Activated CD4-positive, alpha-beta memory T cell treated with anti-CD3 and anti-CD28 coated beads for 36 hours (primary cell): ENCODE measurements at regions of chr1 and their contacts with region 1.

Region 1: GRCh38 chr1:207868774-207869721 is 41.9 kb downstream of the CD34 start:
- DNase-seq: peak; percentile 81
- H3K4me3 Mint-ChIP-seq: peak overlapping the region; percentile 90
- H3K27ac Mint-ChIP-seq: peak overlapping the region; percentile 89
- H3K4me1 Mint-ChIP-seq: peaks cover 82% of the 10 kb centered on the region
- H3K27me3 Mint-ChIP-seq: no peaks in the 10 kb centered on the region

Region 2: GRCh38 chr1:207084701-207085180 is 784.3 kb before region 1 on chr1:
- CTCF ChIA-PET with region 1: no interaction called
- POLR2A ChIA-PET with region 1: no interaction called
- intact Hi-C with region 1: no loop called
- DNase-seq: peak; percentile 60
- H3K4me3 Mint-ChIP-seq: no peak overlapping the region
- H3K27ac Mint-ChIP-seq: no peak overlapping the region
- H3K4me1 Mint-ChIP-seq: peaks cover 14% of the 10 kb centered on the region
- H3K27me3 Mint-ChIP-seq: peaks cover 23% of the 10 kb centered on the region

Region 3: DNA sequence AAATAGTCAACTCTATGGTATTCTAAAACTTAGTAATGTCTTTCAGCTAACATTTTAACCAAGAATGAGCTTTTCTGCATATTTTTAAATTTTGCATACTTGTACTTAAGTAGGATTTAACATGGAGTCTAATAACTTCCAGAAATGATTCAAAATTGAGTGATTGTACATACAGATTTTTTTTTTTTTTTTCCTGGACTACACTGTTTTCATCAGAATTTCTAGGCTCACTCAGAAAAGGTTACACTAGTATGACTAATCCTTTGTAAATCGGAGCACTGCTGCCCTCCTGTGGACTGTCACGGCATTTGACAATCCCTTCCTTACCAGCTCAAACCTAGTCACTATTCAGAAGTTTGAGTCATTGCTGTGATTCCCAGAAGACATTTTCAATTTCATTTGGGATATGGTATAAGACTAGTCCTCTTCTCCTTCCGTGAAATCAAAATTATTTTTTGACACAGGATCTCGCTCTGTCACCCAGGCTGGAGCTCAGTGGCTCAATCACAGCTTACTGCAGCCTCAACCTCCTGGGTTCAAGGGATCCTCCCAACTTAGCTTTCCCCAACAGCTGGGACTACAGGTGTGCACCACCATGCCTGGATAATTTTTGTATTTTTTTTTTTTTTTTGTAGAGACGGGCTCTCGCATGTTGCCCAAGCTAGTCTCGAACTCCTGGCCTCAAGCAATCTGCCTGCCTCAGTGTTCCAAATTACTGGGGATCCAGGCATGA is 71.7 kb before region 1 on chr1:
- CTCF ChIA-PET with region 1: interaction called, 44 read pairs
- POLR2A ChIA-PET with region 1: interaction called, 4 read pairs
- intact Hi-C with region 1: no loop called
- DNase-seq: peak; percentile 90
- H3K4me3 Mint-ChIP-seq: no peak overlapping the region
- H3K27ac Mint-ChIP-seq: peak overlapping the region; percentile 64
- H3K4me1 Mint-ChIP-seq: peaks cover 36% of the 10 kb centered on the region
- H3K27me3 Mint-ChIP-seq: no peaks in the 10 kb centered on the region

Region 4: GRCh38 chr1:207838156-207839082 is 30.6 kb before region 1 on chr1:
- CTCF ChIA-PET with region 1: interaction called, 43 read pairs
- POLR2A ChIA-PET with region 1: no interaction called
- intact Hi-C with region 1: no loop called
- DNase-seq: no peak
- H3K4me3 Mint-ChIP-seq: no peak overlapping the region
- H3K27ac Mint-ChIP-seq: peak overlapping the region; percentile 56
- H3K4me1 Mint-ChIP-seq: peaks cover 69% of the 10 kb centered on the region
- H3K27me3 Mint-ChIP-seq: no peaks in the 10 kb centered on the region

Region 5: DNA sequence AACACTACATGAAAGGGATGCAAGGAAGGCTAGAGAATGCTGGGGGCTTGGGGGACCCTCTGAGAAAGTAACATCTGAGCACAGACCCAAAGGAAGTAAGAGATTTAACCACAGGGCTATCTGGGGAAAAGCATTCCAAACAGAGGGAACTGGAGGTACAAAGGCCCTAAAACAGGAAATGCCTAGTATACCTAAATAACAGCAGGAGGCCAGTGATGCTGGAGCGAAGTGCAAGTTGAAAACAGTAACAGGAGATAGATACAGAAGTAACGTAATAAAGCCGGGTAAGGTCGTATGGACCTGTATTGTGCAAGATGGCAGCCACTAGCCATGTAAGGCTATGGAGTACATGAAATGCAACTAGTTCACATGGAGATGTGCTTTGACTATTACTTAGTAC is 10.2 kb before region 1 on chr1:
- CTCF ChIA-PET with region 1: interaction called, 20 read pairs
- POLR2A ChIA-PET with region 1: interaction called, 4 read pairs
- intact Hi-C with region 1: no loop called
- DNase-seq: no peak
- H3K4me3 Mint-ChIP-seq: no peak overlapping the region
- H3K27ac Mint-ChIP-seq: no peak overlapping the region
- H3K4me1 Mint-ChIP-seq: peaks cover 55% of the 10 kb centered on the region
- H3K27me3 Mint-ChIP-seq: no peaks in the 10 kb centered on the region

Region 6: GRCh38 chr1:207919523-207920170 is 50.6 kb after region 1 on chr1:
- CTCF ChIA-PET with region 1: no interaction called
- POLR2A ChIA-PET with region 1: no interaction called
- intact Hi-C with region 1: no loop called
- DNase-seq: no peak
- H3K4me3 Mint-ChIP-seq: no peak overlapping the region
- H3K27ac Mint-ChIP-seq: no peak overlapping the region
- H3K4me1 Mint-ChIP-seq: no peaks in the 10 kb centered on the region
- H3K27me3 Mint-ChIP-seq: peaks cover 21% of the 10 kb centered on the region